CD4-positive, alpha-beta T cell (primary cell): ENCODE measurements at regions of chr20 and their contacts with region 1.

Region 1: GRCh38 chr20:15031546-15032351 is 694.3 kb upstream of the FLRT3 start:
- DNase-seq: peak in 1 of 14 experiments; percentile 5
- ATAC-seq: no peak
- H3K4me3 ChIP-seq: no peak overlapping the region
- H3K4me3 Mint-ChIP-seq: no peak overlapping the region
- H3K27ac ChIP-seq: no peak overlapping the region
- H3K27ac Mint-ChIP-seq: no peak overlapping the region
- H3K4me1 ChIP-seq: no peaks in the 10 kb centered on the region
- H3K4me1 Mint-ChIP-seq: no peaks in the 10 kb centered on the region
- H3K27me3 ChIP-seq: no peaks in the 10 kb centered on the region
- H3K27me3 Mint-ChIP-seq: no peaks in the 10 kb centered on the region
- CTCF ChIP-seq: no peak

Region 2: GRCh38 chr20:15045246-15045645 is 13.5 kb after region 1 on chr20:
- CTCF ChIA-PET with region 1: no interaction called
- POLR2A ChIA-PET with region 1: no interaction called
- intact Hi-C with region 1: loop called in 1 of 2 experiments (anchors 2 kb)
- DNase-seq: no peak
- ATAC-seq: no peak
- H3K4me3 ChIP-seq: no peak overlapping the region
- H3K4me3 Mint-ChIP-seq: no peak overlapping the region
- H3K27ac ChIP-seq: no peak overlapping the region
- H3K27ac Mint-ChIP-seq: no peak overlapping the region
- H3K4me1 ChIP-seq: no peaks in the 10 kb centered on the region
- H3K4me1 Mint-ChIP-seq: no peaks in the 10 kb centered on the region
- H3K27me3 ChIP-seq: no peaks in the 10 kb centered on the region
- H3K27me3 Mint-ChIP-seq: no peaks in the 10 kb centered on the region
- CTCF ChIP-seq: no peak